ENCODE measurements at regions of chrX and their contacts with region 1.

Region 1: GRCh38 chrX:15815779-15816437 is 25.6 kb downstream of the ZRSR2 start:
- DNase-seq: peak in 4 of 5 donors; percentile 16 to 26 (median 20)
- H3K4me3 ChIP-seq: no peak overlapping the region
- H3K4me3 Mint-ChIP-seq: peak overlapping the region in 6 of 8 donors; percentile 52 to 73 (median 54)
- H3K27ac ChIP-seq: no peak overlapping the region
- H3K27ac Mint-ChIP-seq: peak overlapping the region; percentile 43 to 92 (median 89)
- H3K4me1 ChIP-seq: peaks cover 33% of the 10 kb centered on the region
- H3K4me1 Mint-ChIP-seq: peaks cover 22 to 36% (median 32%) of the 10 kb centered on the region in 4 donors
- H3K27me3 ChIP-seq: no peaks in the 10 kb centered on the region
- H3K27me3 Mint-ChIP-seq: no peaks in the 10 kb centered on the region

Region 2: GRCh38 chrX:15789979-15790768 is 25.7 kb before region 1 on chrX and contains the start of gene ZRSR2:
- CTCF ChIA-PET with region 1: interaction called, 8 read pairs
- POLR2A ChIA-PET with region 1: interaction called, 12 read pairs
- intact Hi-C with region 1: no loop called
- DNase-seq: peak; percentile 91 to 95 (median 94)
- H3K4me3 ChIP-seq: peak within 1 kb of the TSS; percentile 65 to 76
- H3K4me3 Mint-ChIP-seq: peak within 1 kb of the TSS in 1 of 8 donors; percentile 18
- H3K27ac ChIP-seq: peak within 1 kb of the TSS; percentile 83
- H3K27ac Mint-ChIP-seq: peak within 1 kb of the TSS in 1 of 7 donors; percentile 68
- H3K4me1 ChIP-seq: peaks cover 37% of the 10 kb centered on the region
- H3K4me1 Mint-ChIP-seq: peaks cover 13 to 35% (median 24%) of the 10 kb centered on the region in 4 donors
- H3K27me3 ChIP-seq: no peaks in the 10 kb centered on the region
- H3K27me3 Mint-ChIP-seq: no peaks in the 10 kb centered on the region
- total RNA-seq, gene ZRSR2: 30.1 to 30.7 TPM